ENCODE measurements at regions of chr12 and their contacts with region 1.

Region 1: GRCh38 chr12:19482551-19483109 is 43.3 kb downstream of the AEBP2 start:
- DNase-seq: peak; percentile 85
- H3K4me3 Mint-ChIP-seq: peak overlapping the region; percentile 30
- H3K27ac Mint-ChIP-seq: peak overlapping the region; percentile 77
- H3K4me1 Mint-ChIP-seq: peaks cover 59% of the 10 kb centered on the region
- H3K27me3 Mint-ChIP-seq: no peaks in the 10 kb centered on the region

Region 2: GRCh38 chr12:18165422-18165871 is 1317.2 kb before region 1 on chr12:
- CTCF ChIA-PET with region 1: no interaction called
- POLR2A ChIA-PET with region 1: no interaction called
- intact Hi-C with region 1: loop called (anchors 1 kb)
- DNase-seq: no peak
- H3K4me3 Mint-ChIP-seq: no peak overlapping the region
- H3K27ac Mint-ChIP-seq: peak overlapping the region; percentile 36
- H3K4me1 Mint-ChIP-seq: peaks cover 18% of the 10 kb centered on the region
- H3K27me3 Mint-ChIP-seq: peaks cover 1% of the 10 kb centered on the region

Region 3: DNA sequence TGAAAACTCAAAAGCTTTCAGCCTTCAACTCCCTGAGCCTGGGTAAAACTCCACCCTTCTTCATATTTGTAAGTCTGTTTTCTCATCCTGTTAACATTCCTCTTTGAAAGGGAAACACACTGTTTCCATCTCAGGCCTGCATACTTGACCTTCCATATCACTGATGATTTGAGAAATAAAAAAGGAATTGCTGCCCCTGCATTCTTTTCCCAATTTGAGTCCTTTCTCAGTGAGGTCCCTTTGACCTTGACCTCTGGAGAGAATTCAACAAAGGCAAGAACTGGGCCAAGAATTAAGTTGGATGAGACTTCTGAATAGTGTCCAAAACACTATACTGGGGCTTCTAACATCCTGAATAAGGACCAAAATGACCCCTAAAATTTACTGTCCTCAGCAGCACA is 64.6 kb after region 1 on chr12:
- CTCF ChIA-PET with region 1: no interaction called
- POLR2A ChIA-PET with region 1: no interaction called
- intact Hi-C with region 1: loop called (anchors 1 kb)
- DNase-seq: no peak
- H3K4me3 Mint-ChIP-seq: no peak overlapping the region
- H3K27ac Mint-ChIP-seq: no peak overlapping the region
- H3K4me1 Mint-ChIP-seq: peaks cover 4% of the 10 kb centered on the region
- H3K27me3 Mint-ChIP-seq: no peaks in the 10 kb centered on the region